Activated T-helper 2 cell treated with anti-CD3 and anti-CD28 coated beads, Interferon-gamma antibody, Interleukin-2, Interleukin-4, amounts not matched to agents 10 μg/mL and 5 μg/mL and 100 μg/mL, durations not matched to agents 14 hours and 24 hours and 36 hours (primary cell): ENCODE measurements at regions of chr4 and their contacts with region 1.

Region 1: DNA sequence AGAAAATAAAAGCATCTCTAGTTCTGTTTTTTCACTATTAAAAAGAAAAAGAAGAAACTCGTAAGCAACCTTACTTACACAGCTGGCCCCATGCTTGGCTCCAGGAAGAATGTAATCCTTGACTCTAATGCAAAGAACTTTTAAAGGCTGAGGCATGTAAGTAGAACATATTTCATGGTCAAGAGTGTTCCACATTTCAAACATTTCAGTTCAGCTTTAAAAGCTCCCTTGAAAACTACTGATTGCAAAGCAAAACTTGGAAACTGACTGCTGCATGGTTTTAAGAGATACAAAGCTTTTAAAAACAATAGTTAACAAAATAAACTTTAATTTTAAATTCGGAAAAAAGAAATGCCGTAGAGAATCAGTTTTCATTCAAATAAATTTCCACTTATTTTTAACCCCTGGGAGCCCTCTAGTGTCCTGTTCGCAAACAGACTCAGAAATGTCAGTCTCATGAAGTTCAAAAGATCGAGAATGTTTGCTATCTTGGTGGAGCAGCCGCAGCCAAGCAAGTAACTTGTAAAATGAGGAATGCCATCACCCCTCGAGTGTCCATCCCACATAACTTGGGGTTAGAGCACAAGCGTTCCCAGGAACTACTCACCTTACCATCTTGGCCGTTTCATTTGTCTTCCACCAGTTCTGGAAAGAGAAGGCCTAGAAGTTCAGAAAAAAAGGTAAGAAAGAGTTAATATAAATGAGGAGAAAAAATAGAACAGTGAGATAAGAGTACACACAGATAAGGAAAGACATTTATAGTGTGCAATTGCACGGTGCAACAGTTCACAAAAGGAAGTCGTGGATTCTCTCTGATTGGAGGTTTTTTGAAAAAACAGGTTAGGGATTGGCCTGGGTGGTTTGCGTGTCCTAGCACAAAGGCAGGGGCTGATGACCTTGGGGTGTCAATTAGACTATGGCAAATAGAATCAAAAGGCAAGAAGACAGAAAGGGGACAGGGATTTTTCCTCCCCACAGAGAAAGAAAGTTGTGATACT is at the start of gene GASK1B:
- DNase-seq: no peak
- H3K4me3 Mint-ChIP-seq: no peak within 1 kb of the TSS
- H3K27ac Mint-ChIP-seq: no peak within 1 kb of the TSS
- H3K4me1 Mint-ChIP-seq: peaks cover 1% of the 10 kb centered on the region
- H3K27me3 Mint-ChIP-seq: peaks cover 34% of the 10 kb centered on the region
- total RNA-seq, gene GASK1B: not detected in 2 replicates

Region 2: GRCh38 chr4:157992038-157992705 is 180.4 kb before region 1 on chr4:
- intact Hi-C with region 1: loop called (anchors 2 kb)
- DNase-seq: no peak
- H3K4me3 Mint-ChIP-seq: no peak overlapping the region
- H3K27ac Mint-ChIP-seq: no peak overlapping the region
- H3K4me1 Mint-ChIP-seq: no peaks in the 10 kb centered on the region
- H3K27me3 Mint-ChIP-seq: no peaks in the 10 kb centered on the region

Region 3: GRCh38 chr4:158906073-158906472 is 733.5 kb after region 1 on chr4:
- intact Hi-C with region 1: no loop called
- DNase-seq: no peak
- H3K4me3 Mint-ChIP-seq: no peak overlapping the region
- H3K27ac Mint-ChIP-seq: peak overlapping the region; percentile 42
- H3K4me1 Mint-ChIP-seq: peaks cover 9% of the 10 kb centered on the region
- H3K27me3 Mint-ChIP-seq: no peaks in the 10 kb centered on the region